Right cardiac atrium (tissue), 5 donors: ENCODE measurements at regions of chr2 and their contacts with region 1.

Region 1: DNA sequence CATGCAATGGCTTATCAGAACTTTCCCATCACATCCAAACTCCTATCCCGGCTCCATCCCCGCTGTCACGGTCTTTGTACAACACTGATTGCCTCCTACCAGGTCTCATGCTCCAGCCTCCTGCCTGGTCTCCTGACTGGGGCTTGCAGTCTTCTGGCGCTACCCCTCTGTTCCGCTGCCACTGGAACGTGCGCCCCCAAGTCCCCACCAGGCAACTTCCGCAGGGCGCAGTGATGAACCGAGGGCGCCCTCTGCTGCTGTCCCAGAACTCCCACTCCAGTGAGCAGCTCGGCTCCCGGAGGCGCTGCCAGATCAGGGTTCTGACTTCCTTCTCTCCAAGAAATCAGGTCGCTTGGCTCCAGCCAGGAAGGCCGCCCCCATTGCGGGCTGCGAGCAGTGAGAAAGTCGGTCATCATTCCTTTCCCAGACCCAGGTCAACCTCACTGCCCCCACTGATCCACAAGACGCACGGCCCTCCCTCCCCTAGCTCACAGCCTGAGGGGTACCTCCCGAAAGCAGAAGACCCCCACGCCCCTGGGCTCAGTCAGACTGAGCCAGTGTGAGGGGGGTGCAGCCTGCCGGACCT is 43.9 kb upstream of the RAB11FIP5 start:
- DNase-seq: peak; percentile 74 to 87 (median 85)
- ATAC-seq: peak; percentile 82 to 93
- H3K4me3 ChIP-seq: no peak overlapping the region
- H3K27ac ChIP-seq: no peak overlapping the region
- H3K4me1 ChIP-seq: no peaks in the 10 kb centered on the region
- H3K27me3 ChIP-seq: no peaks in the 10 kb centered on the region

Region 2: GRCh38 chr2:73053316-73054114 is 103.1 kb before region 1 on chr2:
- intact Hi-C with region 1: no loop called
- DNase-seq: no peak
- ATAC-seq: peak in 1 of 2 donors; percentile 23
- H3K4me3 ChIP-seq: no peak overlapping the region
- H3K27ac ChIP-seq: no peak overlapping the region
- H3K4me1 ChIP-seq: no peaks in the 10 kb centered on the region
- H3K27me3 ChIP-seq: no peaks in the 10 kb centered on the region

Region 3: GRCh38 chr2:73085691-73086360 is 70.8 kb before region 1 on chr2:
- intact Hi-C with region 1: loop called (anchors 2 to 5 kb)
- DNase-seq: peak; percentile 82 to 94 (median 92)
- ATAC-seq: peak; percentile 75 to 76
- H3K4me3 ChIP-seq: no peak overlapping the region
- H3K27ac ChIP-seq: no peak overlapping the region
- H3K4me1 ChIP-seq: peaks cover 5% of the 10 kb centered on the region
- H3K27me3 ChIP-seq: no peaks in the 10 kb centered on the region

Region 4: GRCh38 chr2:73436019-73436418 is 279.4 kb after region 1 on chr2:
- intact Hi-C with region 1: no loop called
- DNase-seq: no peak
- ATAC-seq: no peak
- H3K4me3 ChIP-seq: no peak overlapping the region
- H3K27ac ChIP-seq: no peak overlapping the region
- H3K4me1 ChIP-seq: no peaks in the 10 kb centered on the region
- H3K27me3 ChIP-seq: no peaks in the 10 kb centered on the region